ENCODE measurements at regions of chr15 and their contacts with region 1.

Region 1: DNA sequence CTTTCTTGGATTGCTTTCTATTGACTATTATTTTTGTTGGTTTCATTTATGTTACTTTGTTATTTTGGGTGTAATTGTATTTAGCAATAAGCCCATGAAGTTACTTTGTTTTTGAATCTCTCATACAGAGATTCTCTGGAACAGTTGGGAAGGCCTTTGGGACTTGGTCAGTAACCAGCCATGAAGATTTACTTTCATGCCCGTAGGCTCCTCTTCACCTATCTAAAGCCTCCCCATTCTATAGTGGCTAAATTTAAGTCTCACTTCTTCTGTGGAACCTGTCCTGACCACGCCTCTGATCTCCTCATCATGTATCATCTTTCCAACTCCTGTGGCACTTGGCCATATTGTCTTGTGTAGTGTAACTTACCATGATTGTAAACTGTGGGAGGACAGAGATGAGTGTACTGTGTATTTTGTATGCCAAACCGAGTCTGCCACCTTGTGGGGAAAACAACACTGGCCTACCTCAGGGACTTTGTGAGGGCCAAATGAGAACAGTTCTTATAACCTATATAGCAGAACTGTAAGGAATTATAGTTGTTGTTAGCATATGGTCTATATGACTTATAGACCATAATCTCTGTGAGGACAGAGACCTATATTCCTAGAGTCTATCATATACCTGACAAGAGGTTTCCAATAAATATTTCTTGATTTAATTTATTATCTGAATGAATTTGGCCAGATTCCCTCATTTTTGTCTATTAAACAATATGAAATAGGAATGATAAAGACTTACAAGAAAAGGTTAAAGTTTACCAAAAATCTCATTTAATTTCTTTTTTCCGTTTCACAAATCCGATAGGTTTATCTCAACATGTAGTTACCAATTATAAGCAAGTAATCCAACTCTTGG is 75.0 kb downstream of the STARD9 start:
- DNase-seq: peak in 1 of 2 donors; percentile 44
- ATAC-seq: peak; percentile 94 to 98 (median 96)
- H3K4me3 ChIP-seq: no peak overlapping the region
- H3K27ac ChIP-seq: no peak overlapping the region
- H3K4me1 ChIP-seq: peaks cover 4% of the 10 kb centered on the region
- H3K27me3 ChIP-seq: no peaks in the 10 kb centered on the region
- CTCF ChIP-seq: peak; percentile 77

Region 2: GRCh38 chr15:42548253-42549031 is 102.0 kb before region 1 on chr15 and contains the starts of genes HAUS2 and LRRC57:
- intact Hi-C with region 1: loop called in 1 of 2 experiments (anchors 2 kb)
- DNase-seq: peak; percentile 90 to 94
- ATAC-seq: peak; percentile 94 to 97 (median 94)
- H3K4me3 ChIP-seq: peak within 1 kb of the TSS; percentile 80
- H3K27ac ChIP-seq: peak within 1 kb of the TSS; percentile 88
- H3K4me1 ChIP-seq: peaks cover 38% of the 10 kb centered on the region
- H3K27me3 ChIP-seq: no peaks in the 10 kb centered on the region
- CTCF ChIP-seq: no peak
- total RNA-seq, gene HAUS2: 9.8 to 16.3 (median 12.3) TPM
- total RNA-seq, gene LRRC57: 6.8 to 16.3 (median 10.8) TPM

Region 3: DNA sequence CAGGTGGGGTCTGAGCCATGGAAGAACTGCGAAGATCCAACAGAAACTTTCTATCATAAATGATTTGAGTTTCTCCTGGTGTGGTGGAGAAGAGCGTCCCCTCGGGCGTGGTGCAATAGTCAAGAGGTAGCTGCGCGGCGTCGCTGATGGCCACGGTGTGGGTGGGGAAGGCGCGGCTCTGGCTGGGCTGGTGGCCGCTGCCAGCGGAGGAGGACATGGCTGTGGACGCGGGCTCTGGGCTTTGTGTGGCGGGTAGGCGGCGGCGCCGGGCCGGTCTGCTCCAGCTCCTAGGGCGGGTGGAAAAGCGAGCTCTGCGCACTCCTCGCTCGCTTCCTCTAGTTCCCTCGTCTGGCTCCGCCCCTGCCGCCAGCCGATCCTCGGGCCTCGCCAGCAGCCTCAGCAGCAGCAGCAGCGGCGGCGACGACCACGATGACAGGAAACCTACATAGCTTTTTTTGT is 69.1 kb before region 1 on chr15:
- intact Hi-C with region 1: loop called in 1 of 2 experiments (anchors 5 kb)
- DNase-seq: peak; percentile 86 to 90
- ATAC-seq: peak; percentile 86 to 93 (median 91)
- H3K4me3 ChIP-seq: peak overlapping the region; percentile 64
- H3K27ac ChIP-seq: peak overlapping the region; percentile 28
- H3K4me1 ChIP-seq: peaks cover 13% of the 10 kb centered on the region
- H3K27me3 ChIP-seq: peaks cover 0 to 5% (median 0%) of the 10 kb centered on the region in 3 donors
- CTCF ChIP-seq: no peak